Activated B cell treated with CpG ODN at 0.5 μM for 24 hours (primary cell): ENCODE measurements at regions of chr19 and their contacts with region 1.

Region 1: DNA sequence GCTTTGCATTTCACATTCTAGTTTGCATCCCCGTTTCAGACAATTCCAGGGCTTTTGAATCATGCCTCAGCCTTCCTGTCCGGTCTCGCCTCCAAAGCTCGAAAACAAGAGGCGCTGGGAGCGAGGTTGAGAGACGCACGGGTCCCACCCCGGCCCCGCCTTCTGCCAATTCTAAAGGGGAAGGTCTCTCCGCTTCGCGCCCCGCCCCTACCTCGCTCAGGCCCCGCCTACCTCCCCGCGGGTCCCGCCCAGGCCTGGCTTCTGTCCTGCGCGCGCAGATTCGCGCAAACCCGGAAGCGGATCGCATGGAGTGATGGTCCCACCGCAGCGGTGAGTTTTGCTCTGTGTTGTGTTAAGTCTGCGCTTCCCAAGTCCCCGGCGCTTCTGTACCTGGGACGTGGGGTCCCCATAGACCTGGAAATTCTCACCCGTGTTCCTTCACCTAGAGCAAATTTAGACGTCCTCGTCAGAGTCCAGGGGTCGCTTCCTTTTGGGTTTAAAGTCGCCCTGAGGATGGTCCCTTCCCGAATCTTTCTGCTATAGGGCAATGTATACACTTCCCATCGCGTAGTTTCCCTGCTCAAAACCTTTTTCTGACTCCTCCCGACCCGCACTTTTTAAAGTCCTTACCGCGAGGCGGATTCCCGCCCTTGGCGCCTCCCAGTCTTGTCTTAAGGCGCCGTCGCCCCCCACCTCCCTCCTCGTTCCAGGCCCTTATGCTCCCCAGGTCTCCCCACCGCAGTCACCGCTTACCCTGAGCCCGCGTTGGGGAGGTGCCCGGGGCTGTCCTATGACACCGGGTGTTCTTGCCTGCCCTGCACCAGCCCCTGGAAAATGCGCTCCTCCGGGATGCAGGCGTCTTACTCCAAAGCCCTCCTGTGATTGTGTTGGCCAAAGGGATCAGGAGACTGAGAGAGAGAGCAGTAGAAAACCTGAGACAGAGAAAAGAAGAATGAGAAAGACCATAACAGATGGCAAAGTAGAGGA is at the start of gene ZNF845:
- DNase-seq: peak; percentile 99
- ATAC-seq: peak; percentile 99
- H3K4me3 Mint-ChIP-seq: peak within 1 kb of the TSS; percentile 95
- H3K27ac Mint-ChIP-seq: peak within 1 kb of the TSS; percentile 91
- H3K4me1 Mint-ChIP-seq: peaks cover 30% of the 10 kb centered on the region
- H3K27me3 Mint-ChIP-seq: peaks cover 4% of the 10 kb centered on the region
- CTCF ChIP-seq: no peak
- total RNA-seq, gene ZNF845: 11.6 and 11.9 TPM in 2 replicates

Region 2: DNA sequence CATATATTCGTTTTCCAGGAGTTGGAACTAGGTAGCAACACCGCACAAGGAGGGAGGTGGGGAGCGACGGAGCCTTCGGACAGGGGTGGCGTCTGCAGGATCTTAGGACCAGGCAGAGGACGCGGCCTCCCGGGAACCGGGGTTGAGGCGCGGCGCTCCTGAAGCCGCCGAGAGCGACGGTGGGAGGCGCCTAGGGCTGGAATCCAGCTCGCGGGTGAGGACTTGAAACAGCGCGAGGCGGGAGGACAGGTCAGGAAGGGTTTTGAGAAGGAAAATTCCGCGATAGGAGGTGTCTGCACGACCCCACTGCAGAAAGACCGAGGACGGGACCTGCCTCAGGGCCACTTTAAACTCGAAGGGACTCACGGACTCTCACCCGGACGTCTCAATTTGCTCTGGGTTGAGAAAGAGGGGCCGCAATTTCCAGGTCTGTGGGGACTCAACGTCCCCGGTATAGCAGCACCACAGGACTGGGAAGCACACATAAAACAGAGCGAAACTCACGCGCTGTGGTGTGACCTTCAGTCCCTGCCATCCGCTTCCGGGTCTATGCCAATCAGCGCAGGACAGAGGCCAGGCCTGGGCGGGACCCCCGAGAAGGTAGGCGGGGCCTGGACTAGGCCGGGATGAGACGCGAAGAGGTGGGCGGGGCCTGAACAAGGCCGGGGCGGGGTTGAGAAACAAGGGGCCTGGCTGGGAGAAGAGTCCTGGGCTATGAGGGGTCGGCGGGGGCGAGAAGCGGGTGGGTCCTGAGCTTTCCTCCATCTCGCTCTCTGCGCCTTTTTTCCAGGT is 436.4 kb before region 1 on chr19 and contains the start of gene ZNF320:
- CTCF ChIA-PET with region 1: no interaction called
- POLR2A ChIA-PET with region 1: no interaction called
- intact Hi-C with region 1: loop called (anchors 2 kb)
- DNase-seq: peak; percentile 95
- ATAC-seq: peak; percentile 100
- H3K4me3 Mint-ChIP-seq: peak within 1 kb of the TSS; percentile 95
- H3K27ac Mint-ChIP-seq: peak within 1 kb of the TSS; percentile 94
- H3K4me1 Mint-ChIP-seq: peaks cover 15% of the 10 kb centered on the region
- H3K27me3 Mint-ChIP-seq: no peaks in the 10 kb centered on the region
- CTCF ChIP-seq: no peak
- total RNA-seq, gene ZNF320: 23.0 and 24.0 TPM in 2 replicates

Region 3: DNA sequence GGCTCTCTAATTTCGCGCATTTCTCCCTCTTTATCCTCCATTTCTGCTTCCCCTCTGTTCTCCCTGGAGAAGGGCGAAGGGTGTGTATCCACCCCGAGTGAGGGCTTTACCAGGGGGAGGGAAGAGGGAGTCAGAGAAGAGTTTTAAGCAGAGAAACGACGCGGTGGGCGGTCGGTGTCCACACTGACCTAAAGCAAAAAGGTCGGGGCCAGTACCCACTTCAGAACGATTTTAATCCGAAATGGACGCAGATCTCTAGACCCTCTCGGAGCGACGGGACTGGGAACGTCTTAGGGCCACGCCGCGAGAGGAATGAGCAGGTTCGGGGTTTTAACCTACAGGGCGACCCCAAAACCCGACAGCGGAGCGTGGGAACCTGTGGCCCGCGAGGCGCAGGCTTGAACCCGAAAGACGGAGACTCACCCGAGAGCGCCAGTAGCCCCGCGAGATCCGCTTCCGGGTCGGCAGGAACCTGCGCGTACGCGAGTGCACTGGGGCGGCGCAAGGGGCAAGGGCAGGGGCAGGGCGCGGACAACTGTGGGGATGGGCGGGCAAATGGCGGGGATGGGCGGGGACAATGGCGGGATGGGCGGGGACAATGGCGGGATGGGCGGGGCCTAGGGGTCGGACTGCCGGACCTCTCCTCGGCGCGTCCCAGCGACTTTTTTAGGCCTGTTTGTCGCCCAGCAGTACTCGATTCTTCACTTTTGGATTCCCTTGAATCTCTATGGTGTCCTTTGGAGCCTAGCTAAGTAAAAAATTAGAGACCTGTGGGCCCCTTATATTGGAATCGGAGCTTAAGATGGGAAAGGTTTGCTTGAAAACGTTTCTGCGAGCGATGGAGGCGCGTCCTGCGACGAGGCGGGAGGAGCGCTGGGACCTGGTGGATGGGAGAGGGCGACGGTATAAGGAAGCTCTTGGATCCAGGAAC is 79.1 kb before region 1 on chr19 and contains the start of gene ZNF677:
- CTCF ChIA-PET with region 1: no interaction called
- POLR2A ChIA-PET with region 1: interaction called, 3 read pairs
- intact Hi-C with region 1: loop called (anchors 1 kb)
- DNase-seq: peak; percentile 57
- ATAC-seq: peak; percentile 99
- H3K4me3 Mint-ChIP-seq: peak within 1 kb of the TSS; percentile 87
- H3K27ac Mint-ChIP-seq: peak within 1 kb of the TSS; percentile 77
- H3K4me1 Mint-ChIP-seq: peaks cover 12% of the 10 kb centered on the region
- H3K27me3 Mint-ChIP-seq: no peaks in the 10 kb centered on the region
- CTCF ChIP-seq: no peak
- total RNA-seq, gene ZNF677: 13.7 and 14.2 TPM in 2 replicates

Region 4: DNA sequence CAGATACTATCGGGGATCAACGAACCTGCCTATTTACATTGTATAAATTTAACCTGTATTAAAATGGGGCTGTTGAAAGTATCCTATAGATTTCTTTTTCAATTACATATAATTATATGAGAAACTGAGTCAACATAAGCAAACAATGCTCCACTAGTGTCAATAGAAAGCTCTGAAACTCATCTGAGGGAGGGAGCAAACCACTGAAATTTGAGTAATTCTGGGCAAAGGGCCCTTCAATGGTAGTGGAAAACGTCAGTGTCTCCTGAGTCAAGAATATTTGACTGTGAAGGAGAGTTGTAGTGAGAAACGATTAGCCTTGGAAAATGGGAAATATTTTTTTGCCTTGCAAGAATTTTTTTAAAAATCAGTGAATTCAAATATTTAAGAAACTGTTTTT is 48.7 kb before region 1 on chr19:
- CTCF ChIA-PET with region 1: no interaction called
- POLR2A ChIA-PET with region 1: no interaction called
- intact Hi-C with region 1: no loop called
- DNase-seq: no peak
- ATAC-seq: no peak
- H3K4me3 Mint-ChIP-seq: no peak overlapping the region
- H3K27ac Mint-ChIP-seq: no peak overlapping the region
- H3K4me1 Mint-ChIP-seq: no peaks in the 10 kb centered on the region
- H3K27me3 Mint-ChIP-seq: no peaks in the 10 kb centered on the region
- CTCF ChIP-seq: no peak

Region 5: GRCh38 chr19:53311044-53311443 is 22.7 kb before region 1 on chr19:
- CTCF ChIA-PET with region 1: no interaction called
- POLR2A ChIA-PET with region 1: no interaction called
- intact Hi-C with region 1: no loop called
- DNase-seq: no peak
- ATAC-seq: no peak
- H3K4me3 Mint-ChIP-seq: no peak overlapping the region
- H3K27ac Mint-ChIP-seq: no peak overlapping the region
- H3K4me1 Mint-ChIP-seq: no peaks in the 10 kb centered on the region
- H3K27me3 Mint-ChIP-seq: peaks cover 22% of the 10 kb centered on the region
- CTCF ChIP-seq: no peak

Region 6: DNA sequence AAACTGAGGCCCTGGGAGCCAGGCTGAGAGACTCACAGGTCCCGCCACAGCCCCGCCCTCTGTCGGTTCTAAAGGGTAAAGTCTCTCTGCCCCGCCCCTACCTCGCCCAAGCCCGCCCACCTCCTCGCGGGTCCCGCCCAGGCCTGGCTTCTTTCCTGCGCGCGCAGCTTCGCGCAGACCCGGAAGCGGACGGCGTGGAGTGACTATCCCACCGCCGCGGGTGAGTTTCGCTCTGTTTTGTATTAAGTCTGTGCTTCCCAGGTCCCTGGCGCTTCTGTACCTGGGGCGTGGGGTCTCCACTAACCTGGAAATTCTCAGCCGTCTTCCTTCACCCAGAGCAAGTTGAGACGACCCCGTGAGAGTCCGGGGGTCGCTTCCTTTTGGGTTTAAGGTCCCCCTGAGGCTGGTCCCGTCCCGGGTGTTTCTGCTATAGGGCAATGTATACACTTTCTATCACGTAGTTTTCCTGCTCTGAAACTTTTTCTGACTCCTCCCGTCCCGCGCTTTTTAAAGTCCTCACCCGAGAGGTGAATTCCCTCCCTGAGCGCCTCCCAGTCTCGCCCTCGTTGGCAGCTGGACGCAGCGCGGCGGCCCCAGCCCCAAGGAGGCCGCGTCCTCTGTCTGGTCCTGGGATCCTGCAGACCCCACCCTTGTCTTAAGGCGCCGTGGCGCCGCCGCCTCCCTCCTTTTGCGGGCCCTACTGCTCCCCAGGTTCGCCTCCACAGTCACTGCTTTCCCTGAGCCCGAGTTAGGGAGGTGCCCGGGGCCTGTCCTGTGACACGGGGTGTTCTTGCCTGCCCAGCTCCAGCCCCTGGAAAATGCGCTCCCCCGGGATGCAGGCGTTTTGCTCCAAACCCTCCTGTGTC is 61.5 kb after region 1 on chr19 and contains the start of gene ZNF765:
- CTCF ChIA-PET with region 1: no interaction called
- POLR2A ChIA-PET with region 1: interaction called, 4 read pairs
- intact Hi-C with region 1: loop called (anchors 2 kb)
- DNase-seq: peak; percentile 98
- ATAC-seq: peak; percentile 99
- H3K4me3 Mint-ChIP-seq: peak within 1 kb of the TSS; percentile 95
- H3K27ac Mint-ChIP-seq: peak within 1 kb of the TSS; percentile 90
- H3K4me1 Mint-ChIP-seq: peaks cover 29% of the 10 kb centered on the region
- H3K27me3 Mint-ChIP-seq: no peaks in the 10 kb centered on the region
- CTCF ChIP-seq: no peak
- total RNA-seq, gene ZNF765: 16.2 and 18.9 TPM in 2 replicates

Region 7: GRCh38 chr19:53467485-53468262 is 133.9 kb after region 1 on chr19 and contains the start of gene ZNF813:
- CTCF ChIA-PET with region 1: no interaction called
- POLR2A ChIA-PET with region 1: no interaction called
- intact Hi-C with region 1: loop called (anchors 10 kb)
- DNase-seq: peak; percentile 97
- ATAC-seq: peak; percentile 99
- H3K4me3 Mint-ChIP-seq: peak within 1 kb of the TSS; percentile 94
- H3K27ac Mint-ChIP-seq: peak within 1 kb of the TSS; percentile 90
- H3K4me1 Mint-ChIP-seq: peaks cover 32% of the 10 kb centered on the region
- H3K27me3 Mint-ChIP-seq: peaks cover 18% of the 10 kb centered on the region
- CTCF ChIP-seq: no peak
- total RNA-seq, gene ZNF813: 8.2 and 10.7 TPM in 2 replicates

Region 8: DNA sequence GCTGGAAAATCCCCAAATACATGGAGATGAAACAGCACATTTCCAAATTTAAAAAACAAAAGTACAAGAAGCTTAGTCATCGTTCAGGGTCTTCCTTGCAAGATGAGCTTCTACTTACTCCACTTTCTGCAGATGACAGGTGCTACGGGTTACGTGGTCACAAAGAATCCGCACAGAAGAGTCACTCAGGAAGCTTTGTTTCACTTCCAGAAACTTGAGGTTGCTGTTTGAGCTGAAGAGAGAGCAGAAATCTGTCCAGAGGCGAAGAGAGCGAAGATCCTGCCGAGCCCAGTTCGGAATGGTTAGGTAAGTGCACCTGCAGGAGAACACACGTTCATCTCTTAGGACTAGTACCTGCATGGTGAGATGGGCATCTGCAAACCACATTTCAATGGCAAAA is 1604.2 kb after region 1 on chr19:
- CTCF ChIA-PET with region 1: no interaction called
- POLR2A ChIA-PET with region 1: interaction called, 16 read pairs
- intact Hi-C with region 1: no loop called
- DNase-seq: no peak
- ATAC-seq: peak; percentile 67
- H3K4me3 Mint-ChIP-seq: peak overlapping the region; percentile 44
- H3K27ac Mint-ChIP-seq: peak overlapping the region; percentile 68
- H3K4me1 Mint-ChIP-seq: peaks cover 15% of the 10 kb centered on the region
- H3K27me3 Mint-ChIP-seq: peaks cover 10% of the 10 kb centered on the region
- CTCF ChIP-seq: no peak